MCF 10A (cell line): ENCODE measurements at regions of chr22 and their contacts with region 1.

Region 1: GRCh38 chr22:50544078-50544745 is 1.5 kb upstream of the KLHDC7B start:
- DNase-seq: peak; percentile 18
- H3K4me3 Mint-ChIP-seq: peak overlapping the region; percentile 36
- H3K27ac Mint-ChIP-seq: peak overlapping the region; percentile 28
- H3K4me1 Mint-ChIP-seq: peaks cover 31% of the 10 kb centered on the region
- H3K27me3 Mint-ChIP-seq: no peaks in the 10 kb centered on the region
- CTCF ChIP-seq: peak; percentile 26

Region 2: DNA sequence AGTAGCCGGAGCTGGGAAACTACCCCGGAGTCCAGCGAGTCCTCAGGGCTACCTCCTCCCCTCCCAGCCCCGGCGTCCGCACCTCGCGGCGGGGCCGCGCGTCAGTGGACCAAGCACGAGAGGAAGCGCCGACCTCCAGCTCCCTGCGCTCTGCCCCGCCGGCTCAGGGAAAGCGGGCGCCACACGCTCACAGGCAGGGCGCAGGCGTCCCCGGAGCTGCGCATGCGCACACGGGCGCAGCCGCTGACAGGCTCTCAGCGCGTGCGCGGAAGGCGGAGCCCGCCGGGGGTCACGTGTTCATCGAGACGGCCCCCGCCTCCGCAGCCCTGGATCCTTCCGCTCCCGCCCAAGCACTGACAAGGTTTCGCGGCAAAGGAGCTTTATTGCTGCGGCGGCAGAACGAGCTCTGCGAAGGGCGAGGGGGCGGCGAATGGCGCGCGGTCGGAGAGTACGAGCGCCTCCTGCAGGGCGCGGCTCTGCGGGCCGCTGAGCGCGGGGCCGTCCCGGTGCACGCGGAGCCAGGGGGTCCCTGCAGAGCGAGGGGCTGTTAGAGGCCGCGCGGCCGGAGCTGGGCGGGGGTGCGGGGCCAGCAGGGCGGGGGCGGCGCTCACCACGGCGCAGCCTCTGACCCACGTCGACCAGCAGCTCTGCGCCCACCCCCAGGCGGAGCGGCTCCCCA is 18.7 kb before region 1 on chr22 and contains the start of gene SCO2:
- CTCF ChIA-PET with region 1: interaction called, 8 read pairs
- POLR2A ChIA-PET with region 1: interaction called, 170 read pairs
- intact Hi-C with region 1: no loop called
- DNase-seq: peak; percentile 96
- H3K4me3 Mint-ChIP-seq: peak within 1 kb of the TSS; percentile 85
- H3K27ac Mint-ChIP-seq: peak within 1 kb of the TSS; percentile 88
- H3K4me1 Mint-ChIP-seq: peaks cover 20% of the 10 kb centered on the region
- H3K27me3 Mint-ChIP-seq: no peaks in the 10 kb centered on the region
- CTCF ChIP-seq: peak; percentile 49
- total RNA-seq, gene SCO2: 2.4 and 5.4 TPM in 2 replicates

Region 3: GRCh38 chr22:50530877-50531545 is 13.2 kb before region 1 on chr22:
- CTCF ChIA-PET with region 1: interaction called, 8 read pairs
- POLR2A ChIA-PET with region 1: interaction called, 170 read pairs
- intact Hi-C with region 1: loop called (anchors 1 kb)
- DNase-seq: peak; percentile 94
- H3K4me3 Mint-ChIP-seq: peak overlapping the region; percentile 85
- H3K27ac Mint-ChIP-seq: peak overlapping the region; percentile 97
- H3K4me1 Mint-ChIP-seq: peaks cover 22% of the 10 kb centered on the region
- H3K27me3 Mint-ChIP-seq: no peaks in the 10 kb centered on the region
- CTCF ChIP-seq: no peak